Panc1 (cell line): ENCODE measurements at regions of chr9 and their contacts with region 1.

Region 1: DNA sequence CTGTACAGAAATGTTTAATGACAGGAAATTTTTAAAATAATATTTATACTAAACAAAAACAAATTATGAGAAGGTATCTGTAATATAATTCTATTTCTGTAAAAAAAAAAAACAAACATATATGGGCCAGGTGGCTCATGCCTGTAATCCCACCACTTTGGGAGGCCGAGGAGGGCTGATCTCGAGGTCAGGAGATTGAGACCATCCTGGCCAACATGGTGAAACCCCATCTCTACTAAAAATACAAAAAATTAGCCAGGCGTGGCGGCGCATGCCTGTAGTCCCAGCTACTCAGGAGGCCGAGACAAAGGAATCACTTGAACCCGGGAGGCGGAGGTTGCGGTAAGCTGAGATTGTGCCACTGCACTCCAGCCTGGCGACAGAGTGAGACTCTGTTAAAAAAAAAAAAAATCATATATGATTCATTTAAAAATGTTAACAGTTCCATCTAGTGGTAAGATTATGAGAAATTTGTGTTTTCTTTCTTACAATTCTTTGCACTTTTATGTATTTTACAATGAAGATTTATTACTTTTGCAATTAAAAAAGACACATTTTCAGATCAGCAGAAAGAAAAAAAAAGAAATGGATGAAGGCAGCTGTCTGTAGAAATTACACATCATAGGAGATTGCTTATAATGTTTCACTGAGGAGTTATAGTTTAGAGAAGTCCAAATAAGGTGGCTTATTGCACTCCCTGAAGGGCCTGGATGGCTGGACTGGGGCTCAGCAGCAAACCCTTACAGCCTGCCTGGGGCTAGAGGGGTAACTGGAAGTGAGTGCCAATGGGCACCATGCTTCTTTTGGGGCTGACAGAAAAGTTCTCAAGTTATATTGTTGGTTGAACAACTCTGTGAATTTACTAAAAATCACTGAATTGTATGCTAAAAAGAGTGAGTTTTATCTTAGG is 20.3 kb downstream of the C9orf153 start:
- DNase-seq: no peak
- ATAC-seq: no peak
- H3K4me3 ChIP-seq: no peak overlapping the region
- H3K27ac ChIP-seq: no peak overlapping the region
- H3K4me1 ChIP-seq: no peaks in the 10 kb centered on the region
- H3K27me3 ChIP-seq: no peaks in the 10 kb centered on the region
- CTCF ChIP-seq: no peak

Region 2: GRCh38 chr9:85859765-85860164 is 379.4 kb before region 1 on chr9:
- CTCF ChIA-PET with region 1: no interaction called
- POLR2A ChIA-PET with region 1: no interaction called
- in situ Hi-C with region 1: no loop called
- intact Hi-C with region 1: no loop called
- DNase-seq: no peak
- ATAC-seq: no peak
- H3K4me3 ChIP-seq: no peak overlapping the region
- H3K27ac ChIP-seq: no peak overlapping the region
- H3K4me1 ChIP-seq: no peaks in the 10 kb centered on the region
- H3K27me3 ChIP-seq: no peaks in the 10 kb centered on the region
- CTCF ChIP-seq: no peak

Region 3: DNA sequence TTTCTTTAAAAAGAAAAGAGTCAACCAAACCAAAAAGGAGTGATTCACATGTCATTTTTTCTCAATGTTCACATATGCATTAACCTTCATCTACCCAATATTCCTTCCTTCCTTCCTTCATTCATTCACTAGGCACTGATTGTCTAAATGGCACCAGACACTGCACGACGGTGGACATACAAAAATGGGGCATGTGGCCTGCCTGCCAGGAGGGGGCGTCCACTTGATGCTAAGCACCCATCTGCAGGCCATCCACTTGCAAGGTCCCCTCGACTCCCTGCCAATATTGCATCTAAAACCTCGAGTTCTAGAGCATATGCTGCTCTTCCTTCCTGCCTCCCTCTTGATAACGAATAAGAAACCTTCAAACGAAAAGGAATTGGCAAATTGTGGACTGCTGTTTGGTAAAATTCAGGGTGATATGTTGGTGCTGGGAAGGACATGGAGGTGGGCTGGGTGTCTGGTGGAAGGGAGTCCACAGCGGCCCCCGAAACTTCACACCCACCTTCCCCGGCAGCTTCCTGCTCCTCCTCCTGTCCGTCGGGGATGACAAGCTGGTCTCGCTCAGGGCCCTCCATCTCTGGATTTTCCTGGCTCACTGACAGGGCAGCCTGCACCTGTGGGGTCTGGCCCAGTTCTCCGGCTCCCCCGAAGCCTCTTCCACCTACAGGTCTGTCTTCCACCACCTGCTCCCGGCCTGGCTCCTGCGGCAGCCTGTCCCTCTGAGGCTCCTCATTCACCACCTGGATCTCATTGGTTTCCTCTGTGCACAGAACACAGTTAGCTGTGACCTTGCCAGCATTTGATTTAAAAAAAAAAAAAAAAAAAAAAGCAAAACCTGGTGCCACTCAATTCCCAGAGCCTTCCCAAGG is 204.0 kb before region 1 on chr9:
- CTCF ChIA-PET with region 1: no interaction called
- POLR2A ChIA-PET with region 1: no interaction called
- in situ Hi-C with region 1: no loop called
- intact Hi-C with region 1: loop called (anchors 10 kb)
- DNase-seq: no peak
- ATAC-seq: peak; percentile 87
- H3K4me3 ChIP-seq: no peak overlapping the region
- H3K27ac ChIP-seq: no peak overlapping the region
- H3K4me1 ChIP-seq: no peaks in the 10 kb centered on the region
- H3K27me3 ChIP-seq: no peaks in the 10 kb centered on the region
- CTCF ChIP-seq: peak; percentile 84

Region 4: GRCh38 chr9:86116425-86116824 is 122.7 kb before region 1 on chr9:
- CTCF ChIA-PET with region 1: no interaction called
- POLR2A ChIA-PET with region 1: no interaction called
- in situ Hi-C with region 1: no loop called
- intact Hi-C with region 1: no loop called
- DNase-seq: no peak
- ATAC-seq: no peak
- H3K4me3 ChIP-seq: no peak overlapping the region
- H3K27ac ChIP-seq: no peak overlapping the region
- H3K4me1 ChIP-seq: no peaks in the 10 kb centered on the region
- H3K27me3 ChIP-seq: no peaks in the 10 kb centered on the region
- CTCF ChIP-seq: no peak

Region 5: DNA sequence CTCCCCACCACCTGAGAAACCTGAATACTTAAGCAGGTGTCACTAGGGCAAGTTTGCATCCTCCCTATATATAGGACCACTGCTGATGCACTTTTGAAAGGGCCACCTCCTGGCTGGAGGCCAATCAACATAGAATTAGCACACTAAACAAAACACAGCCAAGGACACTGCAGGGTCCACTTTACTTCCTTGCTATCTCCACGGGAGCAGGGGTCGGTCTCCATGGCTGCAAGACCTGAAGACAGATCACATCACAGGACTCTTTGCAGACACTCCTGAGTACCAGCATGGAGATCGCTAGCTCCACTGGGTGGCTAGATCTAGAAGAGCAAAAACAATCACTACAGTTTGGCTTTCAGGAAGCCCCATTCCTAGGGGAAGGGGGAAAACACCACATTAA is 52.0 kb before region 1 on chr9:
- CTCF ChIA-PET with region 1: no interaction called
- POLR2A ChIA-PET with region 1: interaction called, 10 read pairs
- in situ Hi-C with region 1: no loop called
- intact Hi-C with region 1: no loop called
- DNase-seq: no peak
- ATAC-seq: no peak
- H3K4me3 ChIP-seq: no peak overlapping the region
- H3K27ac ChIP-seq: no peak overlapping the region
- H3K4me1 ChIP-seq: no peaks in the 10 kb centered on the region
- H3K27me3 ChIP-seq: no peaks in the 10 kb centered on the region
- CTCF ChIP-seq: no peak; the same call in 1 of the 2 replicates

Region 6: GRCh38 chr9:86298873-86299272 is 59.8 kb after region 1 on chr9:
- CTCF ChIA-PET with region 1: no interaction called
- POLR2A ChIA-PET with region 1: no interaction called
- in situ Hi-C with region 1: no loop called
- intact Hi-C with region 1: no loop called
- DNase-seq: no peak
- ATAC-seq: no peak
- H3K4me3 ChIP-seq: no peak overlapping the region
- H3K27ac ChIP-seq: no peak overlapping the region
- H3K4me1 ChIP-seq: no peaks in the 10 kb centered on the region
- H3K27me3 ChIP-seq: no peaks in the 10 kb centered on the region
- CTCF ChIP-seq: no peak